ENCODE measurements at regions of chr5 and their contacts with region 1.

Region 1: GRCh38 chr5:79448336-79448735 is 65.6 kb downstream of the HOMER1 start:
- DNase-seq: no peak

Region 2: DNA sequence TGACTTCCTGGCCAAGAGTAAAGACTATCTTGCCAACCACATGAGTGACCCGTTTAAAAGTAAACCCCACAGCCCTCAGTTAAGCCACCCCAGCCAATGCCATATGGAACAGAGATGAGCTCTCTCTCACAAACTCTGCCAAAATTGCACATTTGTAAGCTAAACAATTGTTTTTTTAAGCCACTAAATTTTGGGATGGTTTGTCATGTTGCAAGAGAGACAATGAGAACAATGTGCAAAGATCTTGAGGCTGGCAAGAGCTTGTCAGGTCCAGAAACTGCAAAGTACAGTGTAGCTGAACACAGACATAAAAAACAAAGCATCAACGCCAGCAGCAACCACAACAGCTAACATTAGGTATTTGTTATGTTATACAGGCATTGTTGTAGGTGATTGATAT is 37.8 kb after region 1 on chr5:
- intact Hi-C with region 1: loop called in 1 of 2 experiments (anchors 2 kb)
- DNase-seq: no peak